ENCODE measurements at regions of chr13 and their contacts with region 1.

Region 1: DNA sequence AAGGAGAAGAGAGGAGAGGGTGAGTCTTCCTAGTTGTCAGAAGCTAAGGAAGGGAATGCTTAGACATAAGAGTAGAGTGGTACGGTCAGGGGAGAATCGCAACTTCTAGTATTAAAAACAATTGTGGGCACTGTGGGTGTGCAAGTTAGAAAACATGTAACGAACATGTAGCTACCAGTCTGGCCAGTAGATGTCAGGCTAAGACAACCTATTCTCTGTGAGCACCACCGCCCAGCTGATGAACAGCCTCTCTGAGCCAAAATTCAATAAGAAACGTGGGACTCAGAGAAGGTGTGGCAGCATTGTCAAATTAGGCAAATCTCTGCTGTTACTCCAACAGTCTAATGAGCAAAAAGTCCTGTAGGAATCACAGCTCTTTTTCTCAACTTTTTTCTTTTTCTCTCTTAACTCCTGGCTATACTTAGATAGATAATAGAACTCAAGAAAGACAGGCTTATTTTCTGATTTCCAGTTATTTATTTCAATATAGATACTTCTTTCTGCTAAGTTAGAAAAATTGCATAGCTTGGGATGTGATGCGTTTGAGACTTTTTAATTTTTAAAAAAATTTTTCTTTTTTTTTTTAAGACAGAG is 186.2 kb downstream of the USP12 start:
- DNase-seq: peak; percentile 77
- H3K4me3 ChIP-seq: no peak overlapping the region
- H3K27ac ChIP-seq: no peak overlapping the region
- H3K4me1 ChIP-seq: peaks cover 4% of the 10 kb centered on the region
- H3K27me3 ChIP-seq: peaks cover 2 to 4% of the 10 kb centered on the region in 2 experiments
- CTCF ChIP-seq: peak; percentile 63 to 74
- POLR2A ChIP-seq: no peak

Region 2: DNA sequence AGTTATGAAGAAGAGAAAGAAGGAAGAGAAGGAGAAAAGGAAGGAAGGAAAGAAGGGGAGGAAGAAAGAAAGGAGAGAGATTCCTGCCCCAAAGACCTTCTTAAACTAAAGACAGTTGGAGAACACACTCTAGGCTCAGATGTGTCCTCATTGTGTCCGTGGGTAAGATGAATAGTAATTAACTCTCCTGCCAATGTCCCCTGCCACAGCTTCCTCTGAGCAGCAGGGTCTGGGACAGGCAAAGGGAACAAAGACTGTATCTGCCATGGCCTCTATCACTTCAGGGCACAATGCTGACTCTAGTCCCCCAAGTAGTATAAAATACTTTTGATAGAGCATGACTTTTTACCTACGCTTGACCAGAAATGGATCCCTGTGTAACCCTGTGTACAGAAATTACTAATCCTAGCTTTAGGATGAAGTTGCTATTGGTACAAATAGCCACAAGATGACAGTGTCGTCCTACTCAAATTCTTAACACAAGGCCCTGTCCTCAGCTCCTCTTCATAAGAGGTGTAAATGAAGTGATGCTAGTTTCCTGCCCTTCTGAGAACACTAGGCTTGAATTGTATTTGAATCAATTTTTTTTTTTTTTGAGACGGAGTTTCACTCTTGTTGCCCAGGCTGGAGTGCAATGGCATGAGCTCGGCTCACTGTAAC is 38.6 kb before region 1 on chr13:
- CTCF ChIA-PET with region 1: interaction called, 29 read pairs
- POLR2A ChIA-PET with region 1: no interaction called
- dilution Hi-C with region 1: no loop called
- intact Hi-C with region 1: loop called (anchors 1 kb)
- DNase-seq: peak; percentile 39
- H3K4me3 ChIP-seq: no peak overlapping the region
- H3K27ac ChIP-seq: no peak overlapping the region
- H3K4me1 ChIP-seq: no peaks in the 10 kb centered on the region
- H3K27me3 ChIP-seq: peaks cover 10 to 12% of the 10 kb centered on the region in 2 experiments
- CTCF ChIP-seq: peak; percentile 34 to 52
- POLR2A ChIP-seq: no peak

Region 3: DNA sequence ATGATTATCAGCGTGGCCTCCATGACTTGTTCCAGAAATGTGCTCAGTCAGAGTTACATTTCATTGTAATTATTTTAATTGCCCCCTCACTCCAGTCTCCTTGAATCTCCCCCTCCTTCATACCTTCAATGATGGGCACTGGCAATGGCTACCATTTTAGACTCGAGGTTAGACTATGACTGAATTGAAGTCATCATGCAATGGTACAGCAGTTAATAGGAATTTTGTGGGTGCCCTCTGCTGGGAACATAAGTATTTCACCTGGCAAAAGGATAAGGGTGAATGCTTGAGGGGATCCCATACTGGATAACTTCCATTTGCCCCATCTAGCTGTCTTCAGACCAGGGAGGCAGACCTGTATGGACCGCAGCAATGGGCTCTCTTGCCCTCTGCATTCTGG is 218.5 kb after region 1 on chr13:
- CTCF ChIA-PET with region 1: interaction called, 11 read pairs
- POLR2A ChIA-PET with region 1: no interaction called
- dilution Hi-C with region 1: no loop called
- intact Hi-C with region 1: loop called (anchors 1 kb)
- DNase-seq: peak; percentile 41
- H3K4me3 ChIP-seq: no peak overlapping the region
- H3K27ac ChIP-seq: no peak overlapping the region
- H3K4me1 ChIP-seq: no peaks in the 10 kb centered on the region
- H3K27me3 ChIP-seq: peaks cover 2 to 3% of the 10 kb centered on the region in 2 experiments
- CTCF ChIP-seq: peak; percentile 3 to 25
- POLR2A ChIP-seq: no peak

Region 4: DNA sequence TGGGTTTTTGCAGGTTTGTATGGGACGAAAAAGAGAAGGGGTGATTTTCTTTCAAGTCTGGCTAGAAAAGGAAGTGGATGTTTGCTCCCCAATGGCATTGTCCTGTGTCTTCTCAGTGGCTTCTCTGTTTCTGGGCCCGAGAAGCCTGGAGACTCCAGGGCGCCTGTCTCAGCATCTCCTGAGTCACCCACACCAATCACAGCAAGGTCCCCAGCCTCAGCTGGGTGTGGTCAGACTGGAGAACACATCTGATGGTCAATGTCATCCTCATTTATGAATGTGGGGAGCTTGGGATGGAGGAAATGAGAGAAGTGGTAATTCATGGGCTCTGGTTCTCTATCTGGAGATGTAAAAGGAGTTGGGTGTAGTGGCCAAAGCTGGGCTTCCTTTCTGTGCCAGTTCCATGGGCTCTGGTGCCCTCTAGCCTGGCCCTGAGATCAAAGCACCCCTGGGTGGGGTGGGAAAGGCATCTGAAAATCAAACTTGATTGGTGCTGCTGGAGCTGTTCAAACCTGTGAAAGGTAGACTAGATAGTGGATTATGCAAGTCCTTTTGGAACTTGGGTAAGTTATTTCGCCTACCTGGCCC is 298.6 kb after region 1 on chr13:
- CTCF ChIA-PET with region 1: interaction called, 98 read pairs
- POLR2A ChIA-PET with region 1: no interaction called
- dilution Hi-C with region 1: no loop called
- intact Hi-C with region 1: loop called (anchors 1 kb)
- DNase-seq: peak; percentile 26
- H3K4me3 ChIP-seq: no peak overlapping the region
- H3K27ac ChIP-seq: no peak overlapping the region
- H3K4me1 ChIP-seq: no peaks in the 10 kb centered on the region
- H3K27me3 ChIP-seq: peaks cover 2 to 3% of the 10 kb centered on the region in 2 experiments
- CTCF ChIP-seq: peak; percentile 39 to 43
- POLR2A ChIP-seq: no peak

Region 5: DNA sequence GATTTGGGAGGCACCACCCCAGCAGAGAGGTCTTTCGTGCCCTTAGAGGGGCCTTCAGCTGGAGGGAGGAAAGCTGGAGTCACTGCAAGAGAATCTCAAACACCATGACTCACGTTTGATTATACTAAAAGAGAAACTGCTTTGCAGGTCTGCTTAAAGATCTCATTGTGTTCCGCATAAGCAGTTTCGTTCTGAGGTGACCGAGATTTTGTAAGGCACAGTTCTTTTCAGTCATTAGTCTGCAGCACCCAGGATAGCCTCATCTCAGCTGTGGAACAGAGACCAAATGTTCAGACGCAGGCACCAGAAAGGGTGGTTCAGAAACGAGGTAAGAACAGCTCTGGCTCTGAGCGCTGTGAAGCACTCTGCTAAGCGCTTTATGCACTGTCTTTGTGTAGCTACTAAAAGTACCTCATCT is 367.8 kb after region 1 on chr13:
- CTCF ChIA-PET with region 1: interaction called, 343 read pairs
- POLR2A ChIA-PET with region 1: no interaction called
- dilution Hi-C with region 1: no loop called
- intact Hi-C with region 1: no loop called
- DNase-seq: no peak
- H3K4me3 ChIP-seq: no peak overlapping the region
- H3K27ac ChIP-seq: no peak overlapping the region
- H3K4me1 ChIP-seq: no peaks in the 10 kb centered on the region
- H3K27me3 ChIP-seq: peaks cover 2 to 5% of the 10 kb centered on the region in 2 experiments
- CTCF ChIP-seq: no peak
- POLR2A ChIP-seq: no peak

Region 6: GRCh38 chr13:27980280-27980998 is 995.1 kb after region 1 on chr13:
- CTCF ChIA-PET with region 1: interaction called, 10 read pairs
- POLR2A ChIA-PET with region 1: no interaction called
- dilution Hi-C with region 1: no loop called
- intact Hi-C with region 1: loop called (anchors 10 kb)
- DNase-seq: no peak
- H3K4me3 ChIP-seq: no peak overlapping the region
- H3K27ac ChIP-seq: no peak overlapping the region
- H3K4me1 ChIP-seq: no peaks in the 10 kb centered on the region
- H3K27me3 ChIP-seq: peaks cover 64 to 74% of the 10 kb centered on the region in 2 experiments
- CTCF ChIP-seq: no peak
- POLR2A ChIP-seq: no peak